ENCODE measurements at regions of chrX and their contacts with region 1.

Region 1: DNA sequence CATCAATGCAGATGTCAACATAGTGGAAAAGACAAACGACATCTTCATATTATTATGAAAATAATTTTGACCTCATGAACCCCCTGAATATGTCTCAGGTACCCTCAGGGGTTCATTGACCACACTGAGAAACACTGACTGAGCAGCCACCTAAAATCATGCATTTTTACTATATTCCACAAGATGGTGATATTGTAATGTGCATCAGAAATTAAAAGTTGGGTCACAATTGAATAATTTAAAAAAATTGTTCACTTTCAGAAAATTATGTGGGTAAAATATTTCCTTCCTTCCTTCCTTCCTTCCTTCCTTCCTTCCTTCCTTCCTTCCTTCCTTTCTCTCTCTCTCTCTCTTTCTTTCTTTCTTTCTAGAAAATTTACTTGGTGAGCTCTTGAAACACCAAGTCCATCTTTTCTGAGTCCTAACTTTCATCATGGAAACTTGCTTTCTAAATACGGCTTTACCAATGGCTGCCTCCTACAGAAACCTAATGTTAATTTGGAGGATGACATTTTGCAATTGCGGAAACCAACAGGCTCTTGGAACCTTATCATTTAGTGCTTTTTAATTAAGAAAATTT is 103.6 kb downstream of the RTL3 start:
- DNase-seq: no peak
- H3K4me3 ChIP-seq: no peak overlapping the region
- H3K27ac ChIP-seq: no peak overlapping the region
- H3K4me1 ChIP-seq: no peaks in the 10 kb centered on the region
- H3K27me3 ChIP-seq: no peaks in the 10 kb centered on the region
- CTCF ChIP-seq: peak in 5 of 6 experiments; percentile 37 to 51 (median 50)
- POLR2A ChIP-seq: no peak

Region 2: GRCh38 chrX:78237134-78237533 is 318.4 kb before region 1 on chrX:
- intact Hi-C with region 1: no loop called
- DNase-seq: no peak
- H3K4me3 ChIP-seq: no peak overlapping the region
- H3K27ac ChIP-seq: no peak overlapping the region
- H3K4me1 ChIP-seq: no peaks in the 10 kb centered on the region
- H3K27me3 ChIP-seq: no peaks in the 10 kb centered on the region
- CTCF ChIP-seq: no peak
- POLR2A ChIP-seq: no peak

Region 3: GRCh38 chrX:79081895-79082512 is 526.5 kb after region 1 on chrX:
- intact Hi-C with region 1: loop called (anchors 10 kb)
- DNase-seq: no peak
- H3K4me3 ChIP-seq: no peak overlapping the region
- H3K27ac ChIP-seq: no peak overlapping the region
- H3K4me1 ChIP-seq: no peaks in the 10 kb centered on the region
- H3K27me3 ChIP-seq: no peaks in the 10 kb centered on the region
- CTCF ChIP-seq: peak; percentile 39 to 64 (median 50)
- POLR2A ChIP-seq: no peak